CD8-positive, alpha-beta T cell (primary cell): ENCODE measurements at regions of chr4 and their contacts with region 1.

Region 1: GRCh38 chr4:169627307-169627706 is 6.9 kb downstream of the CLCN3 start:
- DNase-seq: peak in 1 of 9 experiments; percentile 2
- ATAC-seq: peak; percentile 25
- H3K4me3 ChIP-seq: no peak overlapping the region
- H3K4me3 Mint-ChIP-seq: no peak overlapping the region
- H3K27ac ChIP-seq: no peak overlapping the region
- H3K27ac Mint-ChIP-seq: peak overlapping the region; percentile 34
- H3K4me1 ChIP-seq: peaks cover 13% of the 10 kb centered on the region
- H3K4me1 Mint-ChIP-seq: peaks cover 47% of the 10 kb centered on the region
- H3K27me3 ChIP-seq: no peaks in the 10 kb centered on the region
- H3K27me3 Mint-ChIP-seq: no peaks in the 10 kb centered on the region
- CTCF ChIP-seq: no peak

Region 2: GRCh38 chr4:169099771-169100180 is 527.5 kb before region 1 on chr4:
- CTCF ChIA-PET with region 1: no interaction called
- POLR2A ChIA-PET with region 1: no interaction called
- intact Hi-C with region 1: no loop called
- DNase-seq: no peak
- ATAC-seq: no peak
- H3K4me3 ChIP-seq: no peak overlapping the region
- H3K4me3 Mint-ChIP-seq: no peak overlapping the region
- H3K27ac ChIP-seq: no peak overlapping the region
- H3K27ac Mint-ChIP-seq: no peak overlapping the region
- H3K4me1 ChIP-seq: no peaks in the 10 kb centered on the region
- H3K4me1 Mint-ChIP-seq: no peaks in the 10 kb centered on the region
- H3K27me3 ChIP-seq: no peaks in the 10 kb centered on the region
- H3K27me3 Mint-ChIP-seq: peaks cover 5% of the 10 kb centered on the region
- CTCF ChIP-seq: no peak

Region 3: GRCh38 chr4:169649545-169650226 is 22.4 kb after region 1 on chr4:
- CTCF ChIA-PET with region 1: no interaction called
- POLR2A ChIA-PET with region 1: no interaction called
- intact Hi-C with region 1: loop called in 1 of 2 experiments (anchors 2 kb)
- DNase-seq: no peak
- ATAC-seq: no peak
- H3K4me3 ChIP-seq: no peak overlapping the region
- H3K4me3 Mint-ChIP-seq: no peak overlapping the region
- H3K27ac ChIP-seq: no peak overlapping the region
- H3K27ac Mint-ChIP-seq: no peak overlapping the region
- H3K4me1 ChIP-seq: no peaks in the 10 kb centered on the region
- H3K4me1 Mint-ChIP-seq: peaks cover 26% of the 10 kb centered on the region
- H3K27me3 ChIP-seq: no peaks in the 10 kb centered on the region
- H3K27me3 Mint-ChIP-seq: no peaks in the 10 kb centered on the region
- CTCF ChIP-seq: no peak

Region 4: DNA sequence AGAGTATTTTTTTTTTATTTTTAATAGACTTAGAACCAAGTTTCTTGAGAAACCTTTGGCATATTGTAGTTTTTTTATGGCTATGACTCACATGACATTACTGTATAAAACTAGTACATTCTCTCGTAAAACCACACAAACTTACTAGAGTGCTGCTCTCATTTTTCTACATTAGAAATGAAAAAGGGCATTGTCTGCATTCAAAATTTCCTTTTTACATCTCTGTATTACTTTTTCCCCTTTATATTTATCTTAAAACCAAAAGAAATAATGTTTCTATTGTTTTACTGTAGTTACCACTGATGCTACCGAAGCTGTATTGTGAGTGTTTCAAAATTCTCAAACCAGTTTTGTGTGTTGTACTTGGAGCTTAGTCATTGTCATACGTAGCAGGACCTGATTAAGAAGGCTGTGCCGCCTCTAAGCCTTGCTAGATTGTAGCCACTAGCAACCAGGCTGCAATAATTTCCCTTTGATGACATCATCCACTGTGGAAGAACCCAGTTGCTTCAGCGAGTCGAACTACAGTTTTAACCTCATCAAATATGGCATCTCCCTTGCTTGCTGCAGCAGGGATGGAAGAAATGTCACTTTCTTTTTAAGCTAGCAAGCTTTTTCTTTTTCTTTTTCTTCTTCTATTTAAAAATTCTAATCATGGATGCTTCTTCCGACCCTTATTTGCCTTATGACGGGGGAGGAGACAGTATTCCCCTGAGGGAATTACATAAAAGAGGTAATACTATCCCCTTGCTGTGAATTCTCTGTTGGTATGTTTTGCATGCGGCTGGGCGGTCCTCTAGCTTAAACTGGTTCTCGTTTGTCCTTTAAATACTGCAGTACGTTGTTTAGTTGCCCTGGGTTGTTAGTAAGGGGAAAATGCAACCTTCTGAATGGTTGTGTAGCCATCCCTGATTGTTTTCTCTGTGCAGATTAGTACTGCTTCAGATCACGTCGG is 32.7 kb after region 1 on chr4:
- CTCF ChIA-PET with region 1: no interaction called
- POLR2A ChIA-PET with region 1: no interaction called
- intact Hi-C with region 1: loop called in 1 of 2 experiments (anchors 2 kb)
- DNase-seq: peak; percentile 29 to 91 (median 62)
- ATAC-seq: peak; percentile 96
- H3K4me3 ChIP-seq: peak overlapping the region; percentile 13 to 16
- H3K4me3 Mint-ChIP-seq: peak overlapping the region; percentile 80
- H3K27ac ChIP-seq: peak overlapping the region; percentile 13 to 45
- H3K27ac Mint-ChIP-seq: peak overlapping the region; percentile 88
- H3K4me1 ChIP-seq: peaks cover 23% of the 10 kb centered on the region
- H3K4me1 Mint-ChIP-seq: peaks cover 45% of the 10 kb centered on the region
- H3K27me3 ChIP-seq: no peaks in the 10 kb centered on the region
- H3K27me3 Mint-ChIP-seq: no peaks in the 10 kb centered on the region
- CTCF ChIP-seq: no peak